Calu3 (cell line): ENCODE measurements at regions of chr11 and their contacts with region 1.

Region 1: GRCh38 chr11:129434641-129435498 is 59.2 kb downstream of the BARX2 start:
- DNase-seq: no peak
- H3K4me3 Mint-ChIP-seq: peak overlapping the region; percentile 54
- H3K27ac Mint-ChIP-seq: peak overlapping the region; percentile 99
- H3K4me1 Mint-ChIP-seq: peaks cover 61% of the 10 kb centered on the region
- H3K27me3 Mint-ChIP-seq: no peaks in the 10 kb centered on the region
- CTCF ChIP-seq: no peak

Region 2: GRCh38 chr11:129364143-129364654 is 70.7 kb before region 1 on chr11:
- CTCF ChIA-PET with region 1: interaction called, 8 read pairs
- intact Hi-C with region 1: loop called (anchors 5 kb)
- DNase-seq: peak; percentile 88
- H3K4me3 Mint-ChIP-seq: no peak overlapping the region
- H3K27ac Mint-ChIP-seq: no peak overlapping the region
- H3K4me1 Mint-ChIP-seq: peaks cover 24% of the 10 kb centered on the region
- H3K27me3 Mint-ChIP-seq: no peaks in the 10 kb centered on the region
- CTCF ChIP-seq: peak; percentile 92

Region 3: GRCh38 chr11:129386795-129387397 is 48.0 kb before region 1 on chr11:
- CTCF ChIA-PET with region 1: no interaction called
- intact Hi-C with region 1: loop called (anchors 2 kb)
- DNase-seq: no peak
- H3K4me3 Mint-ChIP-seq: peak overlapping the region; percentile 67
- H3K27ac Mint-ChIP-seq: peak overlapping the region; percentile 90
- H3K4me1 Mint-ChIP-seq: peaks cover 85% of the 10 kb centered on the region
- H3K27me3 Mint-ChIP-seq: no peaks in the 10 kb centered on the region
- CTCF ChIP-seq: no peak

Region 4: GRCh38 chr11:129418039-129418438 is 16.8 kb before region 1 on chr11:
- CTCF ChIA-PET with region 1: interaction called, 8 read pairs
- intact Hi-C with region 1: loop called (anchors 2 kb)
- DNase-seq: peak; percentile 42
- H3K4me3 Mint-ChIP-seq: peak overlapping the region; percentile 19
- H3K27ac Mint-ChIP-seq: peak overlapping the region; percentile 84
- H3K4me1 Mint-ChIP-seq: peaks cover 69% of the 10 kb centered on the region
- H3K27me3 Mint-ChIP-seq: no peaks in the 10 kb centered on the region
- CTCF ChIP-seq: no peak

Region 5: GRCh38 chr11:129484068-129484467 is 49.2 kb after region 1 on chr11:
- CTCF ChIA-PET with region 1: no interaction called
- intact Hi-C with region 1: no loop called
- DNase-seq: no peak
- H3K4me3 Mint-ChIP-seq: no peak overlapping the region
- H3K27ac Mint-ChIP-seq: no peak overlapping the region
- H3K4me1 Mint-ChIP-seq: no peaks in the 10 kb centered on the region
- H3K27me3 Mint-ChIP-seq: no peaks in the 10 kb centered on the region
- CTCF ChIP-seq: no peak